ENCODE measurements at regions of chr18 and their contacts with region 1.

Region 1: GRCh38 chr18:32086861-32087260 is 4.8 kb upstream of the RNF138 start:
- DNase-seq: no peak
- H3K4me3 Mint-ChIP-seq: no peak overlapping the region
- H3K27ac Mint-ChIP-seq: no peak overlapping the region
- H3K4me1 Mint-ChIP-seq: peaks cover 40% of the 10 kb centered on the region
- H3K27me3 Mint-ChIP-seq: no peaks in the 10 kb centered on the region

Region 2: DNA sequence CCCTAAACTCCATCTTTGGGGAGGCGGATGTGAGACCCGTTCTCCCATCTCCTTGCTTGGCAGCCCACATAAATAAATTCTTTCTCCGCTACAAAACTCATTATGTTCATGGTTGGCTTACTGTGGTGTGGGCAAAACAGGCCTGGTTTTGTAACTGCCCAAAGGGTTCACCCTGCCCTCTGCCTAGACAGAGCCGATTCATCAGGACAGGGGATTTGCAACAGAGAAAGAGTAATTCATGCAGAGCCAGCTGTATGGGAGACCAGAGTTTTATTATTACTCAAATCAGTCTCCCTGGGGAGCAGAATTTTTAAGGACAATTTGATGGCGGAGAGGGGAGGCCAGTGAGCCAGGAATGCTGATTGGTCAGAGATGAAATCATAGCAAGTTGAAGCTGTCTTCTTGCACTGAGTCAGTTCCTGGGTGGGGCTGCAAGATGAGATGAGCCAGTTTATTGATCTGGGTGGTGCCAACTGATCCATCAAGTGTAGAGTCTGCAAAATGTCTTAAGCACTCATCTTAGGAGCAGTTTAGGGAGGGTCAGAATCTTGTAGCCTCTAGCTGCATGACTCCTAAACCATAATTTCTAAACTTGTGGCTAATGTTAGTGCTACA is 76.6 kb before region 1 on chr18:
- intact Hi-C with region 1: no loop called
- DNase-seq: no peak
- H3K4me3 Mint-ChIP-seq: no peak overlapping the region
- H3K27ac Mint-ChIP-seq: no peak overlapping the region
- H3K4me1 Mint-ChIP-seq: peaks cover 11% of the 10 kb centered on the region
- H3K27me3 Mint-ChIP-seq: no peaks in the 10 kb centered on the region

Region 3: GRCh38 chr18:32048507-32049091 is 38.3 kb before region 1 on chr18:
- intact Hi-C with region 1: loop called (anchors 1 kb)
- DNase-seq: no peak
- H3K4me3 Mint-ChIP-seq: peak overlapping the region; percentile 63
- H3K27ac Mint-ChIP-seq: peak overlapping the region; percentile 97
- H3K4me1 Mint-ChIP-seq: peaks cover 41% of the 10 kb centered on the region
- H3K27me3 Mint-ChIP-seq: no peaks in the 10 kb centered on the region

Region 4: GRCh38 chr18:34001376-34001775 is 1914.5 kb after region 1 on chr18:
- intact Hi-C with region 1: no loop called
- DNase-seq: no peak
- H3K4me3 Mint-ChIP-seq: no peak overlapping the region
- H3K27ac Mint-ChIP-seq: no peak overlapping the region
- H3K4me1 Mint-ChIP-seq: no peaks in the 10 kb centered on the region
- H3K27me3 Mint-ChIP-seq: no peaks in the 10 kb centered on the region

Measured in activated T-helper 2 cell treated with anti-CD3 and anti-CD28 coated beads, Interferon-gamma antibody, Interleukin-2, Interleukin-4, amounts not matched to agents 10 μg/mL and 5 μg/mL and 100 μg/mL, durations not matched to agents 14 hours and 24 hours and 36 hours (primary cell).